ENCODE measurements at regions of chr19 and their contacts with region 1.

Region 1: DNA sequence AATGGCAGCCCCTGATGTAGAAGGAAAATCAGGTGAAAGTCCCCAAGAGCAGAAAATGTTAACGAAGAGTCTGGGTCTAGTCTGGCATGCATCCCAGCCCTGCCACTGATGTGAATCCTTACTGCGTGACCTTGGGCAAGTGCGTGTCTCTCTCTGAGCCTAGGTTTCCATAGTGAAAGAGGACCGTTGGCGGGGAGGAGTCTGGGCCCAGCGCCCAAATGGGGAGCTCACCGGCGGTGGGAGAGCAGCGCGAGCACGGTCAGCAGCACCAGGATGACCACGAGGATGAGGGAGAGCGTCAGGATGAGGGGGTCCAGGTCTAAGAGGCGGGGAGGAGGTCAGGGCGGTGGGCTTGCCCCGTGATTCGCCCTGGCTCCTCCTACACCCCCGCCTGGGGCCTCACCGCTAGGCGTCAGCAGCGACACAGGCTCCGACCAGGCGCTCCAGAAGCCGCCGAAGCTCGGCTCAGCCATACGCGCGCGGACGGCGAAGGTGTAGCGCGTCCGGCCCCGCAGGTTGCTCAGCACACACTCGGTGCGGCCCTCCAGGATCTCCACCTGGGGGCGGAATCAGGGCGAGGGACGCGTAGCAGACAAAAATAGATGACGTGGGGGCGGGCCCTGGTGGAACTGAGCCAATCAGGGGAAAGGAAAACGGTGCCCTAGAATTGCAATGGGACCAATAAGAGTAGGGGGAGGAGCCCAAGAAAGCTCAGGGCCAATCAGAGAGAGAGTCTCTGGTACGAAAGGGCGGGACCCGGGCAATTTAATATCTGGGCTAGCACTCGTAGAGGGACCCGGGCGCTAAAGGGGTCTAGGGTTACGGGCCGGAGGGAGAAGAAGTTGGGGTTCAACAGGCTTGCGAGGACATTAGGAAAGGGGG is 3.2 kb downstream of the EPOR start:
- DNase-seq: peak; percentile 95
- ATAC-seq: peak; percentile 89
- H3K4me3 ChIP-seq: peak overlapping the region; percentile 79
- H3K27ac ChIP-seq: peak overlapping the region; percentile 88
- H3K4me1 ChIP-seq: peaks cover 27% of the 10 kb centered on the region
- H3K27me3 ChIP-seq: peaks cover 0 to 5% of the 10 kb centered on the region in 2 experiments; a peak in 2 of 4 replicates
- CTCF ChIP-seq: peak; percentile 75 to 79 (median 76)
- EP300 ChIP-seq: no peak
- POLR2A ChIP-seq: peak; percentile 89
- RAD21 ChIP-seq: peak; percentile 58

Region 2: DNA sequence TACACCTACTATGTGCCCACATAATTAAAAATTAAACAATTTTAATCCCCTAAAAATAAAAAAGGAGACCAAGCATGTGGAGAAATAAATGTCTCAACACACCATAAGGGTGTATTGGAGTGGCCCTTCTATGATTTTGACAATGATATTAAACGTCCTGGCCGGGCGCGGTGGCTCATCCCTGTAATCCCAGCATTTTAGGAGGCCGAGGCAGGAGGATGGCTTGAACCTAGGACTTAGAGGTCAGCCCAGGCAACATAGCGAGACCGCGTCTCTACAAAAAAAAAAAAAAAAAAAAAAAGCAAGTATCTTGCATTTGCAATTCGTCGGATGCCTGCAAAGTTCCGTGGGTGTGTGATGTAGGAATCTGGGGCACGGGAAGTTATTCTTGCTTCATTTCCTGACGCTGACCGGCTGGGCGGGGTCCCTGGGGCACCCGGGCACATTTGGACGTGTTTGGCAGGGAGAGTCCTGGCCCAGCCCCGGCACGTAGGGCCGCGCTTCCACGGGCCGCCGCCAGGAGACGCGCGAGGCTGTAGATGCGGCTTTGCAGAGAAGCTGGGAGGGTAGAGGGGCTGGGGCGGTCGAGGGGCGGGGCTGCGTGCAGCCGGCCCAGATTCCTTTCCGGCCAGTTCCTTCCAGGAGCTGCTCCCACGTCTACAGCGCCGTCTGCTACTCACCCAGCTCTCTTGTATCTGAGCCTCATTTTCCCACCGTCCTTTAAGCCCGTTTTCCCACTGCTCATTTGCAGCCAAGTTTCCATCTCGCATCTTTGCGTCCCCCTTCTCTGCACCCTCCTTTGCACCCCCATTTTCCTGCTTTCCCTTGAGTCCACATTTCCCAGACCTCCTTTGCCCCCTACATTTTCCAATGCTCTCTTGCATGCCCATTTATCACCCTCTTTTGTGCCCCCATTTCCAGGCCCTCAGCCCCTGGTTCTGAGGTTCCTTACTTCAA is 87.2 kb before region 1 on chr19:
- CTCF ChIA-PET with region 1: interaction called, 51 read pairs
- POLR2A ChIA-PET with region 1: interaction called, 8 read pairs
- RAD21 ChIA-PET with region 1: interaction called, 27 read pairs
- SMC1A ChIA-PET with region 1: interaction called, 40 read pairs
- in situ Hi-C with region 1: no loop called
- intact Hi-C with region 1: loop called (anchors 2 kb)
- DNase-seq: peak; percentile 59
- ATAC-seq: peak; percentile 99
- H3K4me3 ChIP-seq: peak overlapping the region; percentile 32; the same call in 1 of the 2 replicates
- H3K27ac ChIP-seq: no peak overlapping the region
- H3K4me1 ChIP-seq: peaks cover 7% of the 10 kb centered on the region
- H3K27me3 ChIP-seq: no peaks in the 10 kb centered on the region
- CTCF ChIP-seq: peak; percentile 91 to 100 (median 96)
- EP300 ChIP-seq: no peak
- POLR2A ChIP-seq: no peak
- RAD21 ChIP-seq: peak; percentile 96

Region 3: GRCh38 chr19:11346092-11346940 is 34.6 kb before region 1 on chr19 and contains the starts of genes CCDC159 and TMEM205:
- CTCF ChIA-PET with region 1: interaction called, 12 read pairs
- POLR2A ChIA-PET with region 1: interaction called, 48 read pairs
- RAD21 ChIA-PET with region 1: interaction called, 12 read pairs
- SMC1A ChIA-PET with region 1: interaction called, 28 read pairs
- in situ Hi-C with region 1: no loop called
- intact Hi-C with region 1: no loop called
- DNase-seq: peak; percentile 97
- ATAC-seq: peak; percentile 96
- H3K4me3 ChIP-seq: peak within 1 kb of the TSS; percentile 95
- H3K27ac ChIP-seq: peak within 1 kb of the TSS; percentile 85
- H3K4me1 ChIP-seq: peaks cover 11% of the 10 kb centered on the region
- H3K27me3 ChIP-seq: no peaks in the 10 kb centered on the region
- CTCF ChIP-seq: peak in 2 of 3 experiments; percentile 20 to 21; a peak in 2 of 6 replicates
- EP300 ChIP-seq: no peak
- POLR2A ChIP-seq: peak; percentile 69
- RAD21 ChIP-seq: no peak
- polyA plus RNA-seq, gene CCDC159: 0.61 to 3.9 TPM
- polyA plus RNA-seq, gene TMEM205: 27.8 to 39.4 TPM

Region 4: DNA sequence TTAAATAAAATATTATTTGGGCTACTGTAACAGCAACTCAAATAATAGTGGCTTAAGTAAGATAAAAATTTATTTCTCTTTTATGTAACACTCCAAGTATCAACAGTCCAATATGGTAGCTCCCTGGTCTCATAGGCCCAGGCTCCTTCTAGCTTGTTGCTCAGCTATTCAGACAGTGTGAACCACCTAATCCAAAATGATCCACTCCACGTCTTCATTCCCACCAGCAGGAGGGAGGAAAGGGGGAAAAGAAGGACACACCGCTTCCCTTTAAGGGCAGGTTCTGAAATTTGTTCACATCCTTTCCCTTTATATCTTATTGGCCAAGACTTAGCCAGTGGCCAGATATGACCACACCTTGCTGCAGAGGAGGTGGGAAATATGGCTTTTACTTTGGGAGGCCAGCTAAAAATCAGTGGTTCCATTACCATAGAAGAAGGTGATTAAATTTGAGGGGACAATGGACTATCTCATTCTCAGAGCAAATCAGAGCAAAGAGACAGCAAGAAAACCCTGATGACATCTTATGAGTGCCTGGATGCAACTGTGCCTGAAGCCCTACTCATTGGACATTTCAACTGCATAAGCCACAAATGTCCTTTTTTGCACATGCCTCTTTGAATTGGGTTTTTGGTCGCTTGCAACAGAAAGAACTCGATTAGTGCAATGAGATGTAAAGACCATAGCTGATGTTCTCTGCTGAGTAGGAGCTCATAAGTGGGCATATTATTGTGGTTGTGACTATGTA is 10.2 kb after region 1 on chr19:
- CTCF ChIA-PET with region 1: interaction called, 21 read pairs
- POLR2A ChIA-PET with region 1: interaction called, 5 read pairs
- RAD21 ChIA-PET with region 1: no interaction called
- SMC1A ChIA-PET with region 1: interaction called, 7 read pairs
- in situ Hi-C with region 1: no loop called
- intact Hi-C with region 1: no loop called
- DNase-seq: no peak
- ATAC-seq: no peak
- H3K4me3 ChIP-seq: no peak overlapping the region
- H3K27ac ChIP-seq: no peak overlapping the region
- H3K4me1 ChIP-seq: no peaks in the 10 kb centered on the region
- H3K27me3 ChIP-seq: no peaks in the 10 kb centered on the region
- CTCF ChIP-seq: no peak
- EP300 ChIP-seq: no peak
- POLR2A ChIP-seq: no peak
- RAD21 ChIP-seq: no peak

Region 5: GRCh38 chr19:11435058-11435832 is 54.4 kb after region 1 on chr19 and contains the starts of genes ODAD3 and PRKCSH:
- CTCF ChIA-PET with region 1: interaction called, 13 read pairs
- POLR2A ChIA-PET with region 1: interaction called, 12 read pairs
- RAD21 ChIA-PET with region 1: interaction called, 10 read pairs
- SMC1A ChIA-PET with region 1: interaction called, 6 read pairs
- in situ Hi-C with region 1: no loop called
- intact Hi-C with region 1: loop called (anchors 2 kb)
- DNase-seq: peak; percentile 99
- ATAC-seq: peak; percentile 98
- H3K4me3 ChIP-seq: peak within 1 kb of the TSS; percentile 99
- H3K27ac ChIP-seq: peak within 1 kb of the TSS; percentile 86
- H3K4me1 ChIP-seq: peaks cover 11% of the 10 kb centered on the region
- H3K27me3 ChIP-seq: no peaks in the 10 kb centered on the region
- CTCF ChIP-seq: peak; percentile 87 to 94 (median 93)
- EP300 ChIP-seq: peak in 1 of 2 experiments; percentile 44; a peak in 1 of 4 replicates
- POLR2A ChIP-seq: peak; percentile 86
- RAD21 ChIP-seq: no peak
- polyA plus RNA-seq, gene ODAD3: not detected
- polyA plus RNA-seq, gene PRKCSH: 1.1 to 5.2 TPM

Region 6: DNA sequence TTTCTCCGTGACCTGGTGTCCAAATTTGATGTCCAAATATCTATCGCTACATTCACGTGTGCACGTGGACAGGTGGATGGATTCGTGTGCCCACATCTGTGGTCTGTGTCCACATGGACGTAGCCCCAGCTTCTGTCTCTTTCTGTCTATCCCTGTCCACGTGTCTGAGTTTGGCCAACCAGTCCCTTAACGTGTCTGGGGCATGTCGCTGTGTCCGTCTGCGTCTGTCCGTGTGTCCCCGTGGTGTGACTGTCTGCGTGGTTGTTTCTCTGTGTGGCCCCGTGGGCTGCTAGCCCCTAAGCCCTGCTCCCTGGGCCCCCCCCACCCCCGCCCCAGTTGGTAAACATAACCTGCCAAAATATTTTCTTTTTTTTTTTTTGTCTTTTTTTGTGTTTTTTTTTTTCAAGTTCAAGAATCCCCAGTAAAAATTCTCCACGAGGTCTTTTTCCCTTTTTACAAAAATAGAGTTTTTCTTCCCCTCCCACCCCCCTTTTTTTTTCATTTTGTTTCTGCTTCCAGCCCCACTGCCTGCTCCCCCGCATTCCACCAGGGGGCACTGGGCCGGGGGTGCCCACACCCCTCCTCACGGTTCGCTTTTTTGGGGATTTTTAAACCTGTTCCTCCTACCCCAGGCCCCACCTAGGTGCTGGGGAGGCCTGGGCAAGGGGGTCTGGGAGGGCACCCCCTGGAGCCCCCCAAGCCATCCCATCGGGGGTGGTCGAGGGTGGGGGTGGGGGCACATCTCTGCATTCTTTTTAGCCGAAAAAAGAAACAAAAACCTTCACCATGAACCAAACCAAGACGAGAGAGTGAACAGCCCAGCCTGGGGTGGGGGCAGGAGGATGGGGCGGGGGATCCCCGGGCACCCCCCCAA is 72.8 kb after region 1 on chr19:
- CTCF ChIA-PET with region 1: interaction called, 10 read pairs
- POLR2A ChIA-PET with region 1: interaction called, 6 read pairs
- RAD21 ChIA-PET with region 1: interaction called, 19 read pairs
- SMC1A ChIA-PET with region 1: interaction called, 7 read pairs
- in situ Hi-C with region 1: no loop called
- intact Hi-C with region 1: no loop called
- DNase-seq: no peak
- ATAC-seq: 0 out of 3 replicates have a peak, but pooled peaks have one; percentile 23
- H3K4me3 ChIP-seq: no peak overlapping the region
- H3K27ac ChIP-seq: no peak overlapping the region
- H3K4me1 ChIP-seq: 0 out of 2 replicates have a peak, but pooled peaks cover 4% of the 10 kb centered on the region
- H3K27me3 ChIP-seq: no peaks in the 10 kb centered on the region
- CTCF ChIP-seq: peak; percentile 32 to 64 (median 41)
- EP300 ChIP-seq: no peak
- POLR2A ChIP-seq: no peak
- RAD21 ChIP-seq: no peak

Region 7: GRCh38 chr19:11528551-11529341 is 147.9 kb after region 1 on chr19 and contains the start of gene ECSIT:
- CTCF ChIA-PET with region 1: interaction called, 3 read pairs
- POLR2A ChIA-PET with region 1: interaction called, 5 read pairs
- RAD21 ChIA-PET with region 1: interaction called, 10 read pairs
- SMC1A ChIA-PET with region 1: no interaction called
- in situ Hi-C with region 1: no loop called
- intact Hi-C with region 1: no loop called
- DNase-seq: peak; percentile 90
- ATAC-seq: peak; percentile 100
- H3K4me3 ChIP-seq: peak within 1 kb of the TSS; percentile 96
- H3K27ac ChIP-seq: peak within 1 kb of the TSS; percentile 88
- H3K4me1 ChIP-seq: no peaks in the 10 kb centered on the region
- H3K27me3 ChIP-seq: no peaks in the 10 kb centered on the region
- CTCF ChIP-seq: no peak
- EP300 ChIP-seq: no peak
- POLR2A ChIP-seq: peak; percentile 87
- RAD21 ChIP-seq: no peak
- polyA plus RNA-seq, gene ECSIT: 1.0 to 4.9 TPM